ENCODE measurements at regions of chr18 and their contacts with region 1.

Region 1: DNA sequence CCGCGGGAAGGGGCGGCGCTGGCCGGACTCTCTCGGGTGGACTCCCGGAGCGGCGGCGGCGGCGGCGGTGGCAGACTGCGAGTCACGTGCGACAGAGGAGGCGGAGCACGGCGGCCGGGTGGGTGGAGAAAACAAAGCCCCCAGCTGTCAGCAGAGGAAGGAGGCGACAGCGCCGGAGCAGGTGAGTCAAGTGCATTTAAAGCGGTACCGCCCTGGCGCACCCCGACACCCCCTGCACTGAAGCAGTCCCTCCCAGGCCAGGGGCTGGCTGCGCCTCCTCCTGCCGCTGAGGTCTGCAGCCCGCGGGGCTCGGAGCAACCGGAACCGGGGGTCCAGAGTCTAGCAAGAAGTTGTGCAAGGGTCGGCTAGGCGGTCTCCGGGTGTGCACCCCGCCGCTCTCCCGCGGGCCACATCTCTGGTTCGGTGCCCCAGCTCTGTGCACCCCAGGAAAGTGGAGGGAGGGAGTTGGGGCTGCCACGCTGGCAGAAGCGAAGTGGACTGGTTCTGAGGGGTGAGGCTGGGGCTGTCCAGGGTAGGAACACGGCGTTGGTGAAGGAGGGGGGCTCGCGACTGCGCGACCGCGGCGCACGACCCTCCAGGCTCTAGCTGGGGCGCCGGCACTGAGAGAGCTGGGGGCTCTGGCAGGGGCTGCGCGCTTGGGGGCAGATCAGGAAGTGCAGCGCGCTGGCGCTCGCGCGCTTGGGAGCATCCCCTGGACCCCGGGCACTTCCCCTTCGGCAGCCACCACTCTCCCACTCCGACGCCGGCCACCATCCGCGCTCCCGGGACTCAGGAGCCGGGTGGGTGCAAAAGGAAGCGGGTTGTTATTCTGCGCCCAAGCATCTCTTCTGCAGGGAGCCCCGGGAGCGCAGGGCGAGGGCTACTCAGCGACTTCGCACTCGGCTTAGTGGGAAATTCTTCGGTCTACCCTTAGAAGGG is 64.0 kb upstream of the MAPRE2 start:
- DNase-seq: peak; percentile 70
- ATAC-seq: peak; percentile 67
- H3K4me3 ChIP-seq: peak overlapping the region; percentile 71 to 98 (median 97)
- H3K27ac ChIP-seq: peak overlapping the region; percentile 73
- H3K4me1 ChIP-seq: peaks cover 32% of the 10 kb centered on the region
- H3K27me3 ChIP-seq: no peaks in the 10 kb centered on the region; a peak in 1 of 5 replicates
- CTCF ChIP-seq: no peak; the same call in none of the 2 replicates
- EP300 ChIP-seq: peak in 1 of 2 experiments; percentile 31; a peak in 1 of 4 replicates
- POLR2A ChIP-seq: no peak; a peak in 2 of 4 replicates
- RAD21 ChIP-seq: no peak

Region 2: DNA sequence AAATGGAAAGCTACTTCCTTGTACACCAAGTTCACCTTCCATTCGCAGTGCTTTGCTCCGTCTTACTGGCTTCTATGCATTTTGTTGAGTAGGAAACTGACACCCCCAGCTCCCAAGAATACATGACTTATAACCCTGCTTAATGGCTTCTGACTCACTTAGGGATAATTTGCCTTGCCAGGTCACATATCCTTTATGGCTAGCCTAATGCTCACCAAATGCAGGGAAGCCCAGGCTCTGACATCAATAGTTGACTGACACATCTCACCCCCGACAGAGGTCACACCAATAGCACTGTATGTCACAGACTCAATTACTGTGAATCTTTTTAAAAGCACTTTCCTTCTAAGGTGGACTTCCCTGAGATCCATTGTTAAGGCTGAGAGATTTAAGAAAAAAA is 119.8 kb before region 1 on chr18:
- CTCF ChIA-PET with region 1: no interaction called
- POLR2A ChIA-PET with region 1: no interaction called
- in situ Hi-C with region 1: no loop called
- intact Hi-C with region 1: no loop called
- DNase-seq: no peak
- ATAC-seq: no peak
- H3K4me3 ChIP-seq: no peak overlapping the region
- H3K27ac ChIP-seq: no peak overlapping the region
- H3K4me1 ChIP-seq: no peaks in the 10 kb centered on the region
- H3K27me3 ChIP-seq: no peaks in the 10 kb centered on the region
- CTCF ChIP-seq: no peak
- EP300 ChIP-seq: no peak
- POLR2A ChIP-seq: no peak
- RAD21 ChIP-seq: no peak

Region 3: GRCh38 chr18:34880882-34881834 is 96.0 kb before region 1 on chr18:
- CTCF ChIA-PET with region 1: no interaction called
- POLR2A ChIA-PET with region 1: no interaction called
- in situ Hi-C with region 1: no loop called
- intact Hi-C with region 1: loop called (anchors 2 kb)
- DNase-seq: peak; percentile 53
- ATAC-seq: peak; percentile 48; the same call in 2 of the 3 replicates
- H3K4me3 ChIP-seq: no peak overlapping the region
- H3K27ac ChIP-seq: no peak overlapping the region
- H3K4me1 ChIP-seq: peaks cover 10% of the 10 kb centered on the region
- H3K27me3 ChIP-seq: no peaks in the 10 kb centered on the region
- CTCF ChIP-seq: peak; percentile 61
- EP300 ChIP-seq: no peak
- POLR2A ChIP-seq: no peak
- RAD21 ChIP-seq: peak; percentile 33; the same call in 1 of the 2 replicates

Region 4: GRCh38 chr18:34929336-34929780 is 47.8 kb before region 1 on chr18:
- CTCF ChIA-PET with region 1: no interaction called
- POLR2A ChIA-PET with region 1: interaction called, 42 read pairs
- in situ Hi-C with region 1: no loop called
- intact Hi-C with region 1: loop called (anchors 1 kb)
- DNase-seq: peak; percentile 94
- ATAC-seq: peak; percentile 77
- H3K4me3 ChIP-seq: peak overlapping the region in 2 of 3 experiments; percentile 44 to 71; a peak in 1 of 6 replicates
- H3K27ac ChIP-seq: peak overlapping the region; percentile 98
- H3K4me1 ChIP-seq: peaks cover 86% of the 10 kb centered on the region
- H3K27me3 ChIP-seq: no peaks in the 10 kb centered on the region
- CTCF ChIP-seq: no peak
- EP300 ChIP-seq: peak; percentile 53 to 93; a peak in 3 of 4 replicates
- POLR2A ChIP-seq: no peak
- RAD21 ChIP-seq: no peak

Region 5: DNA sequence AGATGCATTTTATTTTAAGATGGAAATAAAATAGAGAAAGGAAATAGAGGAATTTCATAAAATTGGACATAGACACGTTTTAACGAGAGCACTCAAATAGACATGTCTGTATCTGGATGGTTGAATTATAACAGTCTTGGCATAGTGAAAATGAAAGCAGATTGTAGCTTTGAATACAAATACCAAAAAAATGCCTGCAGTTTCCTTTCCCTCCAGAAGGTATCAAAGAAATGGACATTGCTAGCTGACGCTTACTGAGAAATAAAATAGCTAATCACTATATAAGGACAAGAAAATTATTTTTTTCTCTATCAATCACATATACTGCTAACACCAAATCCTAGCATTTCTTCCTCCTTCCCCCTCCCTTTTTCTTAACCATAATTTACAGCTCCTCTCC is 52.6 kb after region 1 on chr18:
- CTCF ChIA-PET with region 1: no interaction called
- POLR2A ChIA-PET with region 1: no interaction called
- in situ Hi-C with region 1: no loop called
- intact Hi-C with region 1: loop called (anchors 5 kb)
- DNase-seq: no peak
- ATAC-seq: no peak
- H3K4me3 ChIP-seq: no peak overlapping the region
- H3K27ac ChIP-seq: no peak overlapping the region
- H3K4me1 ChIP-seq: peaks cover 33% of the 10 kb centered on the region
- H3K27me3 ChIP-seq: no peaks in the 10 kb centered on the region
- CTCF ChIP-seq: no peak
- EP300 ChIP-seq: no peak
- POLR2A ChIP-seq: no peak
- RAD21 ChIP-seq: no peak

Measured in HepG2 (cell line).